K562 (cell line): ENCODE measurements at regions of chr4 and their contacts with region 1.

Region 1: DNA sequence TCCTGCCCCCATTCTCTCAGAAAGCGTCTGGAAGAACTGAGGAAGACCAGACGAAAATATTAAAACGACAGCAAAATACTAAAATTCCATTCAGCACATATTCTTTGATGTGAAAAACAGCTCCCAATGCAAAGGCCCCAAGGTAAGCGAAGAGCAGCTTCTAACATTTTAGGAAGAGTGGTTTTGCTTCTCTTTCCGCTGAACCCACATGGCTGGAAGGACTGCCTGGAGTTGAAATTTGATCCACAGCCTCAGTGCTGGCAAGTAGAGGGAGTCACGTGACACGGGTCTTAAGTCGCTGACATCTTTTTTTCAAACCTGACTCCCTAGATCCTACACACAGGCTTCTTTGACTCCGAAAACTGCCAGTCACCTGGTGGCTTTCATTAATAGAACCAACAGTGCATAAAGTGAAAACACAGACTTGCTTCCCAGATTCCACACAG is at the start of gene FAM13A:
- DNase-seq: peak; percentile 74 to 96 (median 78)
- ATAC-seq: peak; percentile 90
- H3K4me3 ChIP-seq: peak within 1 kb of the TSS; percentile 59
- H3K27ac ChIP-seq: peak within 1 kb of the TSS; percentile 79
- H3K4me1 ChIP-seq: peaks cover 4 to 17% of the 10 kb centered on the region in 2 experiments; a peak in 2 of 5 replicates
- H3K27me3 ChIP-seq: no peaks in the 10 kb centered on the region
- CTCF ChIP-seq: no peak
- EP300 ChIP-seq: no peak
- POLR2A ChIP-seq: peak; percentile 88
- RAD21 ChIP-seq: no peak
- polyA plus RNA-seq, gene FAM13A: 14.4 to 15.3 TPM

Region 2: GRCh38 chr4:89044147-89044900 is 12.7 kb before region 1 on chr4:
- CTCF ChIA-PET with region 1: no interaction called
- POLR2A ChIA-PET with region 1: interaction called, 14 read pairs
- in situ Hi-C with region 1: no loop called
- intact Hi-C with region 1: no loop called
- DNase-seq: no peak
- ATAC-seq: no peak
- H3K4me3 ChIP-seq: no peak overlapping the region
- H3K27ac ChIP-seq: no peak overlapping the region
- H3K4me1 ChIP-seq: no peaks in the 10 kb centered on the region
- H3K27me3 ChIP-seq: no peaks in the 10 kb centered on the region
- CTCF ChIP-seq: no peak
- EP300 ChIP-seq: no peak
- POLR2A ChIP-seq: no peak
- RAD21 ChIP-seq: no peak